Activated CD8-positive, alpha-beta T cell treated with anti-CD3 and anti-CD28 coated beads, Interleukin-2, amount 10 ng/mL, durations not matched to agents 7 days and 5 days (primary cell): ENCODE measurements at regions of chr19 and their contacts with region 1.

Region 1: DNA sequence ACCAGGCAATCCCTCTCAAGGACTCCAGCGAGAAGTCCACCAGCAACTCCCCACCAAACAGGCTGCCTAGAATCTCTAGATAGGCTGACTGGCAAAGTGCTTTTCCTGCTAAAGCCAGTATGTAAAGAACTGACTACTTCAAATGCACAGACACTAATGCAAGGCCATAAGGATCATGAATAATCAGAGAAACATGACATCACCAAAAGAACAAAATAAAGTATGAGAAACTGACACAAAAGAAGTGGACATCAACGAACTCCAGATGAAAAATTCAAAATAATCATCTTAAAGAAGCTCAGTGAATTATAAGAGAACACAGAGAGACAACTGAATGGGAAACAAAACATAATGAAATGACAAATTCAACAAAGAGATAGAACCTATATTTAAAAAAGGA is 26.4 kb upstream of the CD70 start:
- DNase-seq: no peak
- ATAC-seq: no peak
- H3K4me3 Mint-ChIP-seq: no peak overlapping the region
- H3K27ac Mint-ChIP-seq: no peak overlapping the region
- H3K4me1 Mint-ChIP-seq: peaks cover 12% of the 10 kb centered on the region
- H3K27me3 Mint-ChIP-seq: peaks cover 21% of the 10 kb centered on the region

Region 2: GRCh38 chr19:6585959-6586455 is 31.4 kb before region 1 on chr19:
- CTCF ChIA-PET with region 1: no interaction called
- POLR2A ChIA-PET with region 1: no interaction called
- DNase-seq: no peak
- ATAC-seq: no peak
- H3K4me3 Mint-ChIP-seq: no peak overlapping the region
- H3K27ac Mint-ChIP-seq: no peak overlapping the region
- H3K4me1 Mint-ChIP-seq: peaks cover 46% of the 10 kb centered on the region
- H3K27me3 Mint-ChIP-seq: peaks cover 25% of the 10 kb centered on the region

Region 3: GRCh38 chr19:6632002-6632621 is 14.7 kb after region 1 on chr19:
- CTCF ChIA-PET with region 1: interaction called, 10 read pairs
- POLR2A ChIA-PET with region 1: no interaction called
- DNase-seq: peak; percentile 93
- ATAC-seq: peak; percentile 82
- H3K4me3 Mint-ChIP-seq: no peak overlapping the region
- H3K27ac Mint-ChIP-seq: no peak overlapping the region
- H3K4me1 Mint-ChIP-seq: peaks cover 40% of the 10 kb centered on the region
- H3K27me3 Mint-ChIP-seq: peaks cover 4% of the 10 kb centered on the region